GM12878 (cell line): ENCODE measurements at regions of chr1 and their contacts with region 1.

Region 1: DNA sequence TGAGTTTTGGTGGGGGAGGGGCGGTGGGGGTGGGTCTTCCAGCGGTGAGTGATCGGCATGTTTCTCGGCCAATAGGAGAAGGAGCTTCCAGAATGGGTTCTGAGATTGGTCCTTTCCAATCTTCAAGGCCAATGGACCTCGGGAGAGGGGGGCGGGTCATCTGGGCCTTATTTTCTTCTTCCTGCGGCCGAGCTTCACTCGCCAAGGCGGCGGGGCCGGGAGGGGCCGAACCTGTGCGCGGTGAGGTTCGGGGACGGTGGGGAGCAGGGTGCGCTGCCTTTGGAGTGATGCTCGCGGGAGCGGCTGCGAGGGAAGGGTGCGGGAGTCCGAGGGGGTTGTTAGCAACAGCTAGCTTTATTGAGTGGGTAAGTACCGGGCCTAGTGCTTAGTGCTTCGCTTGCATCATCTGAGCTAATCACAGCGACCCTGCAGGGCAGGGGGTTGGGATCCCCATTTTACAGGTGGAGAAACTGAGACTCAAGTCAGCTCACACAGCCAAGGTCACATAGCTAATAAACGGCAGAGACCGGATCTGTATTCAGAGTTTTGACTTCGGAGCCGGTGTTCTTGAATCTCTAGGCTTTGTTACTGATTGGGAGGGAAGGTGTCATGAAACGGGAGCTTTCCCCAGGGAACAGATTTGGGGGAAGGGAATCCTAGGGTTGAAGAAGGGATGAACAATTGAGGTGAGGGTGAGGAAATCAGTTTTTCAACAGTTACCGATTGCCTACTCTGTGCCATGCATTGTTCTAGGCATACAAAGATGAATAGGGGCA is 549 bp downstream of the KDM4A start:
- DNase-seq: peak; percentile 83
- ATAC-seq: peak; percentile 87
- H3K4me3 ChIP-seq: peak overlapping the region; percentile 98
- H3K27ac ChIP-seq: peak overlapping the region; percentile 85
- H3K4me1 ChIP-seq: peaks cover 10% of the 10 kb centered on the region
- H3K27me3 ChIP-seq: no peaks in the 10 kb centered on the region
- CTCF ChIP-seq: no peak
- EP300 ChIP-seq: no peak
- POLR2A ChIP-seq: peak; percentile 100
- RAD21 ChIP-seq: no peak

Region 2: GRCh38 chr1:43454266-43455011 is 196.1 kb before region 1 on chr1:
- CTCF ChIA-PET with region 1: interaction called, 3 read pairs
- POLR2A ChIA-PET with region 1: interaction called, 10 read pairs
- RAD21 ChIA-PET with region 1: interaction called, 3 read pairs
- SMC1A ChIA-PET with region 1: no interaction called
- in situ Hi-C with region 1: no loop called
- intact Hi-C with region 1: no loop called
- DNase-seq: peak; percentile 74
- ATAC-seq: peak; percentile 93
- H3K4me3 ChIP-seq: peak overlapping the region; percentile 74; the same call in 1 of the 2 replicates
- H3K27ac ChIP-seq: peak overlapping the region; percentile 61
- H3K4me1 ChIP-seq: peaks cover 7% of the 10 kb centered on the region
- H3K27me3 ChIP-seq: no peaks in the 10 kb centered on the region
- CTCF ChIP-seq: no peak
- EP300 ChIP-seq: no peak
- POLR2A ChIP-seq: no peak; the same call in 1 of the 2 replicates
- RAD21 ChIP-seq: no peak

Region 3: GRCh38 chr1:43468414-43468813 is 182.1 kb before region 1 on chr1:
- CTCF ChIA-PET with region 1: no interaction called
- POLR2A ChIA-PET with region 1: no interaction called
- RAD21 ChIA-PET with region 1: no interaction called
- SMC1A ChIA-PET with region 1: no interaction called
- in situ Hi-C with region 1: no loop called
- intact Hi-C with region 1: no loop called
- DNase-seq: no peak
- ATAC-seq: no peak
- H3K4me3 ChIP-seq: no peak overlapping the region
- H3K27ac ChIP-seq: no peak overlapping the region
- H3K4me1 ChIP-seq: no peaks in the 10 kb centered on the region; the same call in 1 of the 2 replicates
- H3K27me3 ChIP-seq: no peaks in the 10 kb centered on the region
- CTCF ChIP-seq: no peak
- EP300 ChIP-seq: no peak
- POLR2A ChIP-seq: no peak
- RAD21 ChIP-seq: no peak

Region 4: DNA sequence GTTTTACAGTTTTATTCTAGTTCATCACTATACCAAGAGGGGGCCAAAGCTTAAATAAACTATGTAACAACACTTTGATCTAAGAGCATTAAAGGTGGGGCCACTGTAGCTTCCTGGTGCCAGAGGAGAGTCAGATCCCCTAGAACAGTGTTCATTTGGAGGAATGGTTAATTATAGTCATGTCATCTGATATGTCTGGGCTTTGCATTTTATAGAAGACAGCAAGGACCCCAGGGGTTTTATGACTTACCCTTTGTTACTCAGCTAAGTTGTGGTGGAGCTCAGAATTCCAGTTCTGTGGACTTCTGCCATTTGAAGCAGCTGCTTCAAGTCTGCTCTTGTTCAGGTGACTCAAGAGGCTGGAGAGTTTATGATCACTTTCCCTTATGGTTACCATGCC is 16.1 kb after region 1 on chr1:
- CTCF ChIA-PET with region 1: interaction called, 58 read pairs
- POLR2A ChIA-PET with region 1: interaction called, 21 read pairs
- RAD21 ChIA-PET with region 1: interaction called, 39 read pairs
- SMC1A ChIA-PET with region 1: interaction called, 34 read pairs
- in situ Hi-C with region 1: no loop called
- intact Hi-C with region 1: no loop called
- DNase-seq: no peak
- ATAC-seq: no peak
- H3K4me3 ChIP-seq: no peak overlapping the region
- H3K27ac ChIP-seq: no peak overlapping the region
- H3K4me1 ChIP-seq: peaks cover 14% of the 10 kb centered on the region
- H3K27me3 ChIP-seq: no peaks in the 10 kb centered on the region
- CTCF ChIP-seq: no peak
- EP300 ChIP-seq: no peak
- POLR2A ChIP-seq: no peak
- RAD21 ChIP-seq: no peak

Region 5: DNA sequence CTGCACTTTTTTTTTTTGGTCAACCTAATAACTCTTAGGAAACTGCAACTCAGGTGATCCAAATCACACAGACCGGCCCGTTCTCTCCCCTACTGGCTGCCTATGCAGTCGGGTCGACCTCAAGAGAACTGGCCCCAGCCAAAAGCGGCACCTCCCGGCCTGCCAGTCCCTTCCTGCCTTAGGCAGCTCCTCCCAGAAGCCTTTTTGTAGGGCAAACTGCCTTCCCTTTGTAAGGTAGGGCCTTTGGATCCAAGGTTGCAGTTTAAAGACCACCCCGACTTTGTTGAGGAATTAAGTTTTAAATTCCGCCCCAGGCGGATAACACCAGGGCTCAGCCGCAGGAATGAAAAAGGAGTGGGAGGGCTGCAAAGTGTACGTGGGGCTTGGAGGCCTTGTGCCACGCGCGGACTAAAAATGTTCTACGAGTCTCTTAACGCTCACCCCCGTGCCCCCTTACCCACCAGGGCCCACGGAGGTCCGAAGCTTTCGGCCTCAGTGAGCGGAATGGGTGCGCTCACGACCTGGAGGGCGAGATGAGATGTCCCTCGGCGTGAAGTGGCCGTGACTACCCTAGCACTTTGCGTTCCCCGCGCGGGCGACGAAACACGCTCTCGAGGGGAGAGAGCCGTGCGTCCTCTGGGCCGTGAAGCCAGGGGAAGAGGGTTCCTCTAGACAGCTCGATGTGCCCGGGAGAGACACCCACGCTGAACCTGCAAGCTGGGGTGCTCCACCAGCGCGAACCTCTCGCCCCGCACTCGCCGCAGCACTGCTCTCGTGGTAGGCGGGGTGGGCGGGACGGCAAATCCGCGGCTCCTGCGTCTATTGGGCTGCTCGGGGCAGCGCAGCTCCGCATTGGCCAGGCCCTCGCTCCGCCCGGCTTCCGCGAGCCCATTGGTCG is 56.3 kb after region 1 on chr1:
- CTCF ChIA-PET with region 1: interaction called, 12 read pairs
- POLR2A ChIA-PET with region 1: interaction called, 37 read pairs
- RAD21 ChIA-PET with region 1: interaction called, 16 read pairs
- SMC1A ChIA-PET with region 1: interaction called, 8 read pairs
- in situ Hi-C with region 1: no loop called
- intact Hi-C with region 1: loop called (anchors 2 kb)
- DNase-seq: peak; percentile 67
- ATAC-seq: peak; percentile 97
- H3K4me3 ChIP-seq: peak overlapping the region; percentile 78
- H3K27ac ChIP-seq: peak overlapping the region; percentile 71
- H3K4me1 ChIP-seq: peaks cover 3% of the 10 kb centered on the region; the same call in 1 of the 2 replicates
- H3K27me3 ChIP-seq: no peaks in the 10 kb centered on the region
- CTCF ChIP-seq: no peak
- EP300 ChIP-seq: 0 out of 4 replicates have a peak, but pooled peaks of 1 of the 2 experiments have one; percentile 22
- POLR2A ChIP-seq: peak; percentile 96
- RAD21 ChIP-seq: no peak